Thyroid gland (tissue), 4 donors: ENCODE measurements at regions of chr13 and their contacts with region 1.

Region 1: GRCh38 chr13:76473552-76474134 is 412.6 kb downstream of the KCTD12 start:
- DNase-seq: peak; percentile 73 to 79
- H3K4me3 ChIP-seq: no peak overlapping the region
- H3K27ac ChIP-seq: no peak overlapping the region
- H3K4me1 ChIP-seq: no peaks in the 10 kb centered on the region
- H3K27me3 ChIP-seq: no peaks in the 10 kb centered on the region
- CTCF ChIP-seq: peak; percentile 70 to 99 (median 88)
- POLR2A ChIP-seq: no peak

Region 2: DNA sequence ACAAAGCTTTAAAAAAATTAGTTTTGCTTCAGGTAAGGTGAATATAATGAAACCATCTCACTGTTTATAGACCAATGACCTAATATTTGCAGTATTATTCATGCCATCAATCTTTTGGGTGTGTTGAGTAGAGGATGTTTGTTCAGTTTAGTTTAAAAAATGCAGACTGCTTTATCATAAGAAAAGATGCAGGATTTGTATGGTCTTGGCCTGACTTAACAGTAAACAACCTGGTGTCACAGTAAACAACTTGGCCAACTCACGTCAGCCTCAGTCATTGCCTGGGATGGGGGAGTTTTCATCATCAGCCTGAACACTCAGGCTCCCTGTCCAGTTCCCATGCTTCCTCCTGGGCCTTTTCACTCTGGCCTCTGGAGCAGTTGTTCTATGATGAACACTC is 782.5 kb before region 1 on chr13:
- intact Hi-C with region 1: loop called (anchors 10 kb)
- DNase-seq: no peak
- H3K4me3 ChIP-seq: no peak overlapping the region
- H3K27ac ChIP-seq: no peak overlapping the region
- H3K4me1 ChIP-seq: peaks cover 6 to 20% of the 10 kb centered on the region in 2 donors
- H3K27me3 ChIP-seq: no peaks in the 10 kb centered on the region
- CTCF ChIP-seq: no peak
- POLR2A ChIP-seq: no peak

Region 3: DNA sequence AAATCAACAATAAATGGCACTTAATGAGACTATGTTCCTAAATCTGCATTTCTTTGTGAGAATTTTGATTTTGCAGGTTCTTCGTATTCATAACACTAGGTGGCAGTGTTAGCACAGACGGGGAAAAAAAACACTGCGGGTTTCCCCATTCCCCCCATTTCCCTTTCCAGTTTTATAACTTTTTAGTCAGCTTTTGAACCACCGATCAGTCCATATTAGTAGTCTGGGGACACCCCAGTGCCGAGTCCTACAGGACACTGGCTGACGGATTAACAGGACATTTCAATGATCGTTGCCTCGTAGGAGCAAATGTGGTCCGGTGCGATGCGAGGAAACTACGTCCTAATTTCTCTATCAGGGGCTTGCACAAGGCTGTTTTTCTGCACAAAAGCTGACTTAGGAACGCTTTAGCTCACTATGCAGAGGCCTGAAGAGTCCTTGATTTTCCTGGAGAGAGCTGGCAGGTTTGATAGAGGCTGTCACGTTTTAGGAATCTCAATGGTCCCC is 603.2 kb before region 1 on chr13:
- intact Hi-C with region 1: loop called (anchors 5 kb)
- DNase-seq: peak; percentile 17 to 27
- H3K4me3 ChIP-seq: peak overlapping the region in 2 of 3 donors; percentile 23 to 25
- H3K27ac ChIP-seq: peak overlapping the region; percentile 5 to 81 (median 46)
- H3K4me1 ChIP-seq: peaks cover 0 to 6% of the 10 kb centered on the region in 2 donors
- H3K27me3 ChIP-seq: no peaks in the 10 kb centered on the region
- CTCF ChIP-seq: peak; percentile 48 to 80 (median 70)
- POLR2A ChIP-seq: no peak